PC-9 (cell line): ENCODE measurements at regions of chr2 and their contacts with region 1.

Region 1: GRCh38 chr2:40554668-40555285 is 102.9 kb upstream of the SLC8A1 start:
- DNase-seq: peak; percentile 45 to 62
- H3K4me3 ChIP-seq: no peak overlapping the region
- H3K27ac ChIP-seq: no peak overlapping the region
- H3K4me1 ChIP-seq: no peaks in the 10 kb centered on the region
- H3K27me3 ChIP-seq: no peaks in the 10 kb centered on the region
- CTCF ChIP-seq: peak; percentile 97

Region 2: DNA sequence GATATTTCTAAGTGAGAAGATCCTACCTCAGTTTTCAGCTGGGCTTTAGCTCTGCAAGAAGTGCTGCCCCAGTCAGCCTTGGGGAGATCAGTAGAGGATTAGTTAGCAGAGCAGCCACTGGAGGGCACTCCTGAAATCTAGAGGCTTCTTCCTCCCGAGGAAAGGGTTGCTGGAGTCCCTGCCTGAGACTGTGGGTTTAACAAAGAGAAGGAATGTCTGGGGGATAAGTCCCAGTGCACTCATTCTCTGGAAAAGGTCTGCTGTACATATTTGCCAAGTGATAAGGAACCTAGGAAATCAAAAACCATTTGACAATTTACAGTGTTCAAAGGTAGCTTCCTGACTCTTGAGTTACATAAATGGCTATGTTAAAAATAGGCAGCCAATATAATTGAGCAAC is 310.1 kb before region 1 on chr2:
- CTCF ChIA-PET with region 1: no interaction called
- POLR2A ChIA-PET with region 1: no interaction called
- intact Hi-C with region 1: loop called (anchors 1 kb)
- DNase-seq: peak; percentile 43 to 55
- H3K4me3 ChIP-seq: no peak overlapping the region
- H3K27ac ChIP-seq: no peak overlapping the region
- H3K4me1 ChIP-seq: no peaks in the 10 kb centered on the region
- H3K27me3 ChIP-seq: no peaks in the 10 kb centered on the region
- CTCF ChIP-seq: peak; percentile 78

Region 3: DNA sequence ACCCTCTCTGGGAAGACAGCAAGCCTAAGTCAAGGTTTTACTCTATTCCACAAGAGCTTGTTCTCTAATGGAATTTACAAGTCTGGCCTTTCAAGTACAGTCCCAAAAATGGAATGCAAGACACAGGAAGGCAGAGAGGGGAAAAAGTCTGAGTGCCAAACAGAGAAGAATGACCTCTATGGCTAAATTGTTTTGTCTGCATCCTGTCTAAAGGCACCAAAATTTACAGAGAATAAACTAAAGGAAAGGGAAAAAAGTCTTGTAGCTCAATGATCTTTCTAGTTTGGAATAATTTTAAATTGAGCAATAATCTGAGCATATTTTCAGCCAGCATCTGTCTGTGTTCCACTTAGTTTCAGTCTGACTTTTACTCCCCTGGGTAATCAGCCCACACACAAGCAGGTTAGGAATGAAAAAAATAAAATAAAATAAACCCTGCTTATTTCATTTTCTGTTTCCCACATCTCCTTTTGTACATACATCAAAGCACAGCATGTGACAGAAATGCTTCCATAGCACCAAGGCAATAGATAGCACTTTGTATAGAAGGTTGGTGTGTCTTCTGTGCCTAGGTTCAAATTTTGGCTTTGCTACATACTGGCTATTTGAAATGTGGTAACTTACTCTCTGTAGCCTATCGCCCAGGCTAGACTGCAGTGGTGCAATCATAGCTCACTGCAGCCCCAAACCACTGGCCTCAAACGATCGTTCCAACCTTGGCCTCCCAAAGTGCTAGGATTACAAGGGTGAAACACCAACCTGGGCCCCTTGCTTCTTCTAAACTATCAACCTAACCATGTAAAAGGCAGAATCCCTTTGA is 208.0 kb before region 1 on chr2:
- CTCF ChIA-PET with region 1: no interaction called
- POLR2A ChIA-PET with region 1: no interaction called
- intact Hi-C with region 1: no loop called
- DNase-seq: no peak
- H3K4me3 ChIP-seq: no peak overlapping the region
- H3K27ac ChIP-seq: no peak overlapping the region
- H3K4me1 ChIP-seq: 0 out of 2 replicates have a peak, but pooled peaks cover 6% of the 10 kb centered on the region
- H3K27me3 ChIP-seq: no peaks in the 10 kb centered on the region
- CTCF ChIP-seq: no peak

Region 4: GRCh38 chr2:40394597-40394996 is 160.2 kb before region 1 on chr2:
- CTCF ChIA-PET with region 1: no interaction called
- POLR2A ChIA-PET with region 1: no interaction called
- intact Hi-C with region 1: loop called (anchors 2 kb)
- DNase-seq: no peak
- H3K4me3 ChIP-seq: peak overlapping the region; percentile 35; the same call in 1 of the 2 replicates
- H3K27ac ChIP-seq: peak overlapping the region; percentile 77
- H3K4me1 ChIP-seq: peaks cover 29% of the 10 kb centered on the region
- H3K27me3 ChIP-seq: no peaks in the 10 kb centered on the region
- CTCF ChIP-seq: no peak